ENCODE measurements at regions of chr5 and their contacts with region 1.

Region 1: DNA sequence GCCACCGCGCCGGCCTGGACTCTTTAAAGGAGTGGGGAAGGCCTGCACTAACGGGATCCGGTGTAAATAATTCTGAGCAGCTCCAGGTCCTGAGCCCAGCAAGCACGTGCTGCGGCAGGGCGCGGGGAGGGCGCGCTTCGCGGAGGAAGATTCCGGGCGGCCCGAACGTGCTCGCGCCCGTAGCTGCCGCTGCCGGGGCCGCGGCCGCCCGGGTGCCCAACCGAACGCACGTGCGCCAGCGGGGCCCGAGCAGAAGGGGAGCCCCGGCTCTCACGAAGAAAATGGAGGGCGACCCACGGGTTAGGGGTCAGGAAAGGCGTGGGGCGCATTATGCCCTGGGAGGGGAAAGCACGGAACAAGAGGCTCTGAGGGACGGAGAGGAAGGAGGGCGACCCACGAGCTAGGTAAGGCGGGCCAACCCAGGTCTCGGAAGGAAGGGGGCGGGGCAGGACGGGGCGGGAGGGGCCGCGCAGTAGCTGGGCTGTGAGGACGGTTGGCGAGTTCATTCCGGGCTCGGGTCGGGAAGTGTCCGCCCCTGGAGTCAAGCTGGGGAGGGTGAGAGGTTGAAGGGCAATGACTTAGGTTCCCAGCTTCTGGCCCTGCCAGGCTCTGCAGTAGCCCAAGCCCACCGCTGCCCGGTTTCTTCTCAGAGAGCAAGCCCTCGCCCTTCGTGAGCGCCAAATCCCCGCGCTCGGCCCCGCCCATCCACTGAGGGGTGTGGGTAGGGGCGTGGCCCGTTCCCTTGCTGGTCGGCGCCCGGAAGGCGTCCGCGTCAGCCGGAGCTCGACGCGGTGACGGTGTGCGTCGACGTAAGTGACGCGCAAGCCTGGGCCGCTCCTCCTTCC is at the start of gene ZNF131:
- DNase-seq: peak; percentile 99
- ATAC-seq: peak; percentile 86
- H3K4me3 Mint-ChIP-seq: peak within 1 kb of the TSS; percentile 90
- H3K27ac Mint-ChIP-seq: peak within 1 kb of the TSS; percentile 94
- H3K4me1 Mint-ChIP-seq: peaks cover 38% of the 10 kb centered on the region
- H3K27me3 Mint-ChIP-seq: no peaks in the 10 kb centered on the region
- CTCF ChIP-seq: no peak
- total RNA-seq, gene ZNF131: 50.8 and 57.6 TPM in 2 replicates

Region 2: GRCh38 chr5:41924872-41925554 is 1195.9 kb before region 1 on chr5 and contains the start of gene FBXO4:
- CTCF ChIA-PET with region 1: no interaction called
- POLR2A ChIA-PET with region 1: interaction called, 7 read pairs
- intact Hi-C with region 1: loop called (anchors 1 kb)
- DNase-seq: peak; percentile 82
- ATAC-seq: peak; percentile 95
- H3K4me3 Mint-ChIP-seq: peak within 1 kb of the TSS; percentile 93
- H3K27ac Mint-ChIP-seq: peak within 1 kb of the TSS; percentile 97
- H3K4me1 Mint-ChIP-seq: peaks cover 24% of the 10 kb centered on the region
- H3K27me3 Mint-ChIP-seq: no peaks in the 10 kb centered on the region
- CTCF ChIP-seq: no peak
- total RNA-seq, gene FBXO4: 14.8 and 15.9 TPM in 2 replicates

Region 3: DNA sequence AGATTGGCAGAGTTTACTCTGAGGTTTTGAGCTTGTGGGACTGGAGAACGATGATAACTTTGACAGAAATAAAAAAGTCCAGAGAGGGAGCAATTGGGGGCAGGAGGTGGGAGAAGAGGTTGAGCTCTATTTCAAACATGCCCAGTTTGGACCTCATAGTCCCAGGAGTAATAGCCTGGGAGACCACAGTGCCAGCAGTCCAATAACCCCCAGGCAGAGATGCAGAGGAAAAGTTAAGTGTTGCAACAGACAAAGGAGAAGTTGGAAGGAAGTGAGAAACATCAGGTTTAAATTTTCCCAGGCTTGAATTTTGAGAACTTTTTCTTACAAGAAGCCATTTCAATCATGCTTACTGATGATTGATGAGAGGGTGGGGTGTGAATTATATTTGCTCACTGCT is 814.7 kb before region 1 on chr5:
- CTCF ChIA-PET with region 1: no interaction called
- POLR2A ChIA-PET with region 1: no interaction called
- intact Hi-C with region 1: no loop called
- DNase-seq: no peak
- ATAC-seq: no peak
- H3K4me3 Mint-ChIP-seq: no peak overlapping the region
- H3K27ac Mint-ChIP-seq: no peak overlapping the region
- H3K4me1 Mint-ChIP-seq: no peaks in the 10 kb centered on the region
- H3K27me3 Mint-ChIP-seq: no peaks in the 10 kb centered on the region
- CTCF ChIP-seq: no peak

Region 4: GRCh38 chr5:42962124-42962523 is 158.8 kb before region 1 on chr5:
- CTCF ChIA-PET with region 1: no interaction called
- POLR2A ChIA-PET with region 1: no interaction called
- intact Hi-C with region 1: no loop called
- DNase-seq: no peak
- ATAC-seq: no peak
- H3K4me3 Mint-ChIP-seq: no peak overlapping the region
- H3K27ac Mint-ChIP-seq: no peak overlapping the region
- H3K4me1 Mint-ChIP-seq: peaks cover 6% of the 10 kb centered on the region
- H3K27me3 Mint-ChIP-seq: no peaks in the 10 kb centered on the region
- CTCF ChIP-seq: no peak

Region 5: DNA sequence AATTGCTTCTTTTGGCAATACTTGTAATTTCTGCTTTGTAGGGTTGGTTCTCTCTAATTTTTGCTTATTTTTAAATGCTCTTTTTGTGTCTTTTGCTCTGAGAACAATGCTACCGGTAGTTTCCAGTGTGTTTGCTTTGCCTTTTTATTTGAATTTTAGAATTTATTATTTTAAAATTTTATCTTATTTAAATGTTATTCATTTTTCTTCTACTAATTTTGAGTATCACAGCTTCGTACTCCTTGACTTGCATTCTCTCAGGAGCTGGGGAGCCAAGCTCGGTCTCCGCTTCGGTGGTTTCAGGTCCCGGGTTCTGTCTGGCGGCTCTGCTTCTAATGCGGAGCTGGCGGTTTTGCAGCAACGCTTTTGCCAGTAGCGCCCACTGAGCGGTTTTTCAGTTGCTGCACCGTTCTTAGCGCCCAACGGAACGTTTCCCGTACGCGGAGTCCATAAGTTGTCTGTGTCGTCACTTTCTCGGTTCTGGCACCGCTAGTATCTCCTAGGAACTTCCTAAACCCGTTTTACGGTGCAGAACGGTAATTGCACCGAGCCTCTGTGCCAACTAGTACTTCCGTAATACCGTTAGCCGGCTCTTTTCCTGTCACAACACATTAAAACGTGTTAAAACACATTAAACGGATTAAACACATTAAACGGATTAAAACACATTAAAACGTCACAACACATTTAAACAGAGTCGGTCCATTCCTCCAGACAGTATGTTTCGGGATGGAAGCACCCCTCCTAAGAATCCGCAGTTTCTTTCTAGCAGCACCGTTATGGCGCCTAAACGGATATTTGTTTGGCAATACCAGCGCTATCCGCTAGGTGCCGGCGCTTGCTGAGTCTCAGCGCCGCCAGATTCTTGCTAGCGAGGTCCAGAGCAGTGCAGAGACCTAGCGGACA is 126.4 kb before region 1 on chr5:
- CTCF ChIA-PET with region 1: interaction called, 4 read pairs
- POLR2A ChIA-PET with region 1: interaction called, 72 read pairs
- intact Hi-C with region 1: loop called (anchors 1 kb)
- DNase-seq: peak; percentile 72
- ATAC-seq: peak; percentile 66
- H3K4me3 Mint-ChIP-seq: peak overlapping the region; percentile 99
- H3K27ac Mint-ChIP-seq: peak overlapping the region; percentile 100
- H3K4me1 Mint-ChIP-seq: peaks cover 34% of the 10 kb centered on the region
- H3K27me3 Mint-ChIP-seq: peaks cover under 1% of the 10 kb centered on the region
- CTCF ChIP-seq: peak; percentile 89

Region 6: GRCh38 chr5:43040287-43041098 is 80.4 kb before region 1 on chr5 and contains the start of gene ANXA2R:
- CTCF ChIA-PET with region 1: interaction called, 6 read pairs
- POLR2A ChIA-PET with region 1: interaction called, 67 read pairs
- intact Hi-C with region 1: loop called (anchors 1 kb)
- DNase-seq: peak; percentile 78
- ATAC-seq: peak; percentile 62
- H3K4me3 Mint-ChIP-seq: peak within 1 kb of the TSS; percentile 96
- H3K27ac Mint-ChIP-seq: peak within 1 kb of the TSS; percentile 98
- H3K4me1 Mint-ChIP-seq: peaks cover 53% of the 10 kb centered on the region
- H3K27me3 Mint-ChIP-seq: no peaks in the 10 kb centered on the region
- CTCF ChIP-seq: peak; percentile 39
- total RNA-seq, gene ANXA2R: 6.7 and 7.9 TPM in 2 replicates

Region 7: GRCh38 chr5:43137326-43137725 is 16.4 kb after region 1 on chr5:
- CTCF ChIA-PET with region 1: no interaction called
- POLR2A ChIA-PET with region 1: interaction called, 14 read pairs
- intact Hi-C with region 1: no loop called
- DNase-seq: no peak
- ATAC-seq: no peak
- H3K4me3 Mint-ChIP-seq: no peak overlapping the region
- H3K27ac Mint-ChIP-seq: no peak overlapping the region
- H3K4me1 Mint-ChIP-seq: peaks cover 23% of the 10 kb centered on the region
- H3K27me3 Mint-ChIP-seq: no peaks in the 10 kb centered on the region
- CTCF ChIP-seq: no peak

Region 8: GRCh38 chr5:43256261-43256966 is 135.5 kb after region 1 on chr5:
- CTCF ChIA-PET with region 1: no interaction called
- POLR2A ChIA-PET with region 1: no interaction called
- intact Hi-C with region 1: no loop called
- DNase-seq: no peak
- ATAC-seq: no peak
- H3K4me3 Mint-ChIP-seq: no peak overlapping the region
- H3K27ac Mint-ChIP-seq: no peak overlapping the region
- H3K4me1 Mint-ChIP-seq: no peaks in the 10 kb centered on the region
- H3K27me3 Mint-ChIP-seq: peaks cover 11% of the 10 kb centered on the region
- CTCF ChIP-seq: no peak

Region 9: GRCh38 chr5:43268188-43268820 is 147.4 kb after region 1 on chr5:
- CTCF ChIA-PET with region 1: no interaction called
- POLR2A ChIA-PET with region 1: no interaction called
- intact Hi-C with region 1: no loop called
- DNase-seq: no peak
- ATAC-seq: no peak
- H3K4me3 Mint-ChIP-seq: no peak overlapping the region
- H3K27ac Mint-ChIP-seq: no peak overlapping the region
- H3K4me1 Mint-ChIP-seq: no peaks in the 10 kb centered on the region
- H3K27me3 Mint-ChIP-seq: peaks cover 51% of the 10 kb centered on the region
- CTCF ChIP-seq: no peak

Region 10: DNA sequence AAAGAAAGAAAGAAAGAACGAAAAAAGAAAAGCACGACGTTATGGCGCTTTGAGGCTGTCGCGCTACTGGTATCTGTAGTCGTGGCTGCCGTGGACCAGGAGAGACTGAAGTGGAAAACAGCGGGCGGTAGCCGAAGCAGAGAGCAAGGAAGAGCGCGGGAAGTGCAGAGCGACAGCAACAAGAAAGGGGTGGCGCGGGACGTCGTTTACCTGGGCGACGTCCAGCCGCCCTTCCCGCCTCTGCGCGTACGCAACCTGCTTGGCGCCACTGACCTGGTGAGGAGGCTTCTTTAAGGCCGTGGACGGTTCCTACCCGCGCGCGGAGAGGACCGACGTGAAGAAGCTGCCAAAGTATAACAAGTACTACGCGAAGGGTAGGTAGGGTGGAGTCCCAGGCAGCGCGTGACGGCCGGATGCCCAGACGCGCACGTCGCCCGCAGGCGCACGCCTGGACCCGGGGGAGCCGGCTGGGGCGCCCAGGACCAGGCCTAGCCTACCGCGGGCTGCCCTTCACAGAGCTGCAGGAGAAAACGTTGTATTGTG is 275.9 kb after region 1 on chr5:
- CTCF ChIA-PET with region 1: no interaction called
- POLR2A ChIA-PET with region 1: interaction called, 14 read pairs
- intact Hi-C with region 1: loop called (anchors 1 kb)
- DNase-seq: peak; percentile 67
- ATAC-seq: peak; percentile 100
- H3K4me3 Mint-ChIP-seq: peak overlapping the region; percentile 99
- H3K27ac Mint-ChIP-seq: peak overlapping the region; percentile 96
- H3K4me1 Mint-ChIP-seq: peaks cover 20% of the 10 kb centered on the region
- H3K27me3 Mint-ChIP-seq: no peaks in the 10 kb centered on the region
- CTCF ChIP-seq: no peak

Region 11: GRCh38 chr5:43602461-43603343 is 481.8 kb after region 1 on chr5 and contains the start of gene NNT:
- CTCF ChIA-PET with region 1: no interaction called
- POLR2A ChIA-PET with region 1: interaction called, 26 read pairs
- intact Hi-C with region 1: loop called (anchors 1 kb)
- DNase-seq: peak; percentile 76
- ATAC-seq: peak; percentile 69
- H3K4me3 Mint-ChIP-seq: peak within 1 kb of the TSS; percentile 95
- H3K27ac Mint-ChIP-seq: peak within 1 kb of the TSS; percentile 93
- H3K4me1 Mint-ChIP-seq: peaks cover 42% of the 10 kb centered on the region
- H3K27me3 Mint-ChIP-seq: no peaks in the 10 kb centered on the region
- CTCF ChIP-seq: no peak
- total RNA-seq, gene NNT: 59.0 and 63.0 TPM in 2 replicates

Measured in activated B cell treated with CpG ODN at 0.5 μM for 24 hours (primary cell).